ENCODE measurements at regions of chr3 and their contacts with region 1.

Region 1: GRCh38 chr3:167350245-167350862 is 29.7 kb downstream of the ZBBX start:
- DNase-seq: peak in 1 of 2 experiments; percentile 11
- H3K4me3 ChIP-seq: no peak overlapping the region
- H3K4me3 Mint-ChIP-seq: no peak overlapping the region
- H3K27ac Mint-ChIP-seq: no peak overlapping the region
- H3K4me1 ChIP-seq: no peaks in the 10 kb centered on the region
- H3K4me1 Mint-ChIP-seq: no peaks in the 10 kb centered on the region
- H3K27me3 ChIP-seq: no peaks in the 10 kb centered on the region
- H3K27me3 Mint-ChIP-seq: peaks cover 5% of the 10 kb centered on the region
- CTCF ChIP-seq: peak; percentile 49 to 52

Region 2: DNA sequence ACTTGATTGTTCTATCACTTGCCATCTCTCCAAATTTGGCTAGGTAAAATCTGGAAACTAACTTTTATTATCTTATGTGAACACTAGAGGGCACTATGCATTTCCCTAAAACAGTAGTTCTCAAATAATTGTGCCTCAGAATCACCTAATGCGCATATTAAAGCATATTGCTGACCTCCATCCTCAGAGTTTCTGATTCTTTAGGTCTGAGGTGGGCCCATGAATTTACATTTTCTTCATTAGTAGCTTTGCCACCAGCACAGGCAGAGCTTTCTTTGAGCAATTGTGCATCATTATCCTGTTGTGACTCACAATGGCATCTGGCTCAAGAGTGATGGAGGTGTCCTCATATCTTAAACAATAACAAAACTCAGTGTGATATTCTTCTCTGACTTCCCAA is 1495.7 kb before region 1 on chr3:
- CTCF ChIA-PET with region 1: no interaction called
- POLR2A ChIA-PET with region 1: no interaction called
- intact Hi-C with region 1: loop called (anchors 5 kb)
- DNase-seq: no peak
- H3K4me3 ChIP-seq: no peak overlapping the region
- H3K4me3 Mint-ChIP-seq: no peak overlapping the region
- H3K27ac Mint-ChIP-seq: no peak overlapping the region
- H3K4me1 ChIP-seq: no peaks in the 10 kb centered on the region
- H3K4me1 Mint-ChIP-seq: no peaks in the 10 kb centered on the region
- H3K27me3 ChIP-seq: no peaks in the 10 kb centered on the region
- H3K27me3 Mint-ChIP-seq: no peaks in the 10 kb centered on the region
- CTCF ChIP-seq: peak; percentile 44 to 48

Region 3: GRCh38 chr3:166013073-166013679 is 1337.2 kb before region 1 on chr3:
- CTCF ChIA-PET with region 1: no interaction called
- POLR2A ChIA-PET with region 1: no interaction called
- intact Hi-C with region 1: loop called (anchors 5 kb)
- DNase-seq: peak in 1 of 2 experiments; percentile 48
- H3K4me3 ChIP-seq: no peak overlapping the region
- H3K4me3 Mint-ChIP-seq: no peak overlapping the region
- H3K27ac Mint-ChIP-seq: no peak overlapping the region
- H3K4me1 ChIP-seq: no peaks in the 10 kb centered on the region
- H3K4me1 Mint-ChIP-seq: no peaks in the 10 kb centered on the region
- H3K27me3 ChIP-seq: no peaks in the 10 kb centered on the region
- H3K27me3 Mint-ChIP-seq: no peaks in the 10 kb centered on the region
- CTCF ChIP-seq: peak; percentile 43

Region 4: GRCh38 chr3:167102071-167102470 is 248.3 kb before region 1 on chr3:
- CTCF ChIA-PET with region 1: no interaction called
- POLR2A ChIA-PET with region 1: no interaction called
- intact Hi-C with region 1: loop called (anchors 1 kb)
- DNase-seq: no peak
- H3K4me3 ChIP-seq: no peak overlapping the region
- H3K4me3 Mint-ChIP-seq: no peak overlapping the region
- H3K27ac Mint-ChIP-seq: no peak overlapping the region
- H3K4me1 ChIP-seq: no peaks in the 10 kb centered on the region
- H3K4me1 Mint-ChIP-seq: no peaks in the 10 kb centered on the region
- H3K27me3 ChIP-seq: no peaks in the 10 kb centered on the region
- H3K27me3 Mint-ChIP-seq: no peaks in the 10 kb centered on the region
- CTCF ChIP-seq: peak in 1 of 2 experiments; percentile 25

Measured in Caco-2 (cell line).